Posterior vena cava (tissue), 2 donors: ENCODE measurements at regions of chr7 and their contacts with region 1.

Region 1: GRCh38 chr7:115582956-115583355 is 447.6 kb downstream of the TFEC start:
- DNase-seq: no peak

Region 2: GRCh38 chr7:115338911-115339310 is 244.0 kb before region 1 on chr7:
- intact Hi-C with region 1: loop called in 1 of 2 experiments (anchors 5 kb)
- DNase-seq: no peak